Activated CD4-positive, alpha-beta T cell treated with anti-CD3 and anti-CD28 coated beads, Interleukin-2, amount 10 ng/mL, durations not matched to agents 24 days and 14 days (primary cell): ENCODE measurements at regions of chr16 and their contacts with region 1.

Region 1: GRCh38 chr16:87316923-87317749 is at the start of gene C16orf95:
- DNase-seq: peak; percentile 99
- H3K4me3 Mint-ChIP-seq: peak within 1 kb of the TSS; percentile 93
- H3K27ac Mint-ChIP-seq: peak within 1 kb of the TSS; percentile 97
- H3K4me1 Mint-ChIP-seq: peaks cover 16% of the 10 kb centered on the region
- H3K27me3 Mint-ChIP-seq: no peaks in the 10 kb centered on the region
- total RNA-seq, gene C16orf95: 10.9 and 11.1 TPM in 2 replicates

Region 2: GRCh38 chr16:87297918-87298631 is 19.1 kb before region 1 on chr16:
- intact Hi-C with region 1: loop called (anchors 1 kb)
- DNase-seq: peak; percentile 82
- H3K4me3 Mint-ChIP-seq: no peak overlapping the region
- H3K27ac Mint-ChIP-seq: no peak overlapping the region
- H3K4me1 Mint-ChIP-seq: peaks cover 16% of the 10 kb centered on the region
- H3K27me3 Mint-ChIP-seq: no peaks in the 10 kb centered on the region

Region 3: DNA sequence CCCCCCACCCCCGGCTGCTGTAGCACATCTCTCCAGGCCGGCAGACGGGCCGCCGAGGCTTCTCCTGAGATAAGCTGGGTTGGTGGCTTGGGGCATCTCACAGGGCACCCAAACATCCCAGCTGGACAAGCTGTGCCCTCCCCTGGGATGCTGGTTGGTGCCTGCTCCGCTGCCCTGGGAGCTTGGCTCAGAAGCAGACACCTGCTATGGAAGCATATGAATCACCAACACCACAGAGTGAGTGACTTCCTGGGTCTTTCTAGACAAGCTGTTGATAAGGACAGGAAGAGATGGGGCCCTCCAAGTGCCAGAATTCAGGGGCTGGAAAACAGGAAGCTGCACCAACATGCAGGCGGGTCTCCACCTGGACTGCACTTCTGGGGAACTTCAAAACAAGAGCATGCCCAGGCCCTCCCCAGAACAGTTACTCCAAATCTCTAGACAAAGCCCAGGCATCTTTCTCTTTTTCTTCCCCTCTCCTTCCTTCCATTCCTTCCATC is 13.7 kb before region 1 on chr16:
- intact Hi-C with region 1: loop called (anchors 1 kb)
- DNase-seq: peak; percentile 71
- H3K4me3 Mint-ChIP-seq: peak overlapping the region; percentile 58
- H3K27ac Mint-ChIP-seq: peak overlapping the region; percentile 94
- H3K4me1 Mint-ChIP-seq: peaks cover 30% of the 10 kb centered on the region
- H3K27me3 Mint-ChIP-seq: no peaks in the 10 kb centered on the region

Region 4: GRCh38 chr16:87387942-87388817 is 71.0 kb after region 1 on chr16:
- intact Hi-C with region 1: loop called (anchors 1 kb)
- DNase-seq: peak; percentile 96
- H3K4me3 Mint-ChIP-seq: peak overlapping the region; percentile 44
- H3K27ac Mint-ChIP-seq: peak overlapping the region; percentile 96
- H3K4me1 Mint-ChIP-seq: peaks cover 40% of the 10 kb centered on the region
- H3K27me3 Mint-ChIP-seq: peaks cover 2% of the 10 kb centered on the region

Region 5: DNA sequence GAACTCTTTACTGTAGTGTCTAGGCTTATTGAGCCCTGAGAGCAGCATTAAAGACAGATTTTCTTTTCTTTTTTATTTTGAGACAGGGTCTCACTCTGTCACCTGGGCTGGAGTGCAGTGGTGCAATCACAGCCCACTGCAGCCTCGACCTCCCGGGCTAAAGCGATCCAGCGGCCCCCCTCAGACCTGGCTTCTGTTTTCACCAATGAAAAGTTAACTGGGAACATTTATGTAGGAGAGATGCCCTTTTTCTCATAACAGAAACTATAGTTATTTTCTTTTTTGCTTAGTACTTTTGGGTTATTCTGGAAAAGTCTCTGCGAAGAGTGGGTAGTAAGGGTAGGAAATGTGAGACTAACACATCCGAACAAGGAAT is 76.5 kb after region 1 on chr16:
- intact Hi-C with region 1: loop called (anchors 1 kb)
- DNase-seq: no peak
- H3K4me3 Mint-ChIP-seq: peak overlapping the region; percentile 89
- H3K27ac Mint-ChIP-seq: peak overlapping the region; percentile 90
- H3K4me1 Mint-ChIP-seq: peaks cover 37% of the 10 kb centered on the region
- H3K27me3 Mint-ChIP-seq: no peaks in the 10 kb centered on the region

Region 6: DNA sequence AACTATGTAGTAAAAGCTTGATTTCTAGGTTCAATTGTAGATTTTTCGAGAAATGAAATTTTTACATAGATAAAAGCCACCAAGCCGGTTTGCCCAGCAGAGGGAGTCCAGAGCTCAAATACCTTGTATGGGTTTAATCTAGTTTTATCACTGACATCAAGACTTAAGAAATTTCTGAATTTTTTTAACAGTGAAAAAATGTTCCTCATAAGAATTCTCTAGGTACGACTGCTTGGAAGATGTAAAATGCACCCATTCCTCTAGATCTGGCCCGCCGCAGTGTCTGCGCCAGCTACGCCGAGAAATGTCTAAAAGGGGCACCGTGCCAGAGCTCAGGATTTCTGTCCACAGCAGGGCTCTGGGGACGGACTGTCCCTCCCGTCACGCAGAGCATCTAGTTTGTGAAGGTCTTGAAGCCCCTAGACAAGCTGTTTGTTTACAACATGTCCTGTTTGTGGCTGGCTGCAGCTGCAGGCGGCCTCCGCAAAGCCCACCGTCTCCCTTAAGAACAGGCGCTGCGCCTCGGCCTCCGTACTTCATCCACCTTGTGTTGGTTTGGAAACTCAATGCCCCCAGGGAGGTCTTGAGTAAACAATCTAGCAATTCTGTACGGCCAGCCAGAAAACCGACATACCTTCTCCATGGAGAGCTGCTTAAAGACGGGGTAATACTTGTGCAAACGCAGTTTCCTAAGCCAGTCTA is 99.8 kb after region 1 on chr16:
- intact Hi-C with region 1: no loop called
- DNase-seq: peak; percentile 68
- H3K4me3 Mint-ChIP-seq: no peak overlapping the region
- H3K27ac Mint-ChIP-seq: no peak overlapping the region
- H3K4me1 Mint-ChIP-seq: no peaks in the 10 kb centered on the region
- H3K27me3 Mint-ChIP-seq: no peaks in the 10 kb centered on the region

Region 7: DNA sequence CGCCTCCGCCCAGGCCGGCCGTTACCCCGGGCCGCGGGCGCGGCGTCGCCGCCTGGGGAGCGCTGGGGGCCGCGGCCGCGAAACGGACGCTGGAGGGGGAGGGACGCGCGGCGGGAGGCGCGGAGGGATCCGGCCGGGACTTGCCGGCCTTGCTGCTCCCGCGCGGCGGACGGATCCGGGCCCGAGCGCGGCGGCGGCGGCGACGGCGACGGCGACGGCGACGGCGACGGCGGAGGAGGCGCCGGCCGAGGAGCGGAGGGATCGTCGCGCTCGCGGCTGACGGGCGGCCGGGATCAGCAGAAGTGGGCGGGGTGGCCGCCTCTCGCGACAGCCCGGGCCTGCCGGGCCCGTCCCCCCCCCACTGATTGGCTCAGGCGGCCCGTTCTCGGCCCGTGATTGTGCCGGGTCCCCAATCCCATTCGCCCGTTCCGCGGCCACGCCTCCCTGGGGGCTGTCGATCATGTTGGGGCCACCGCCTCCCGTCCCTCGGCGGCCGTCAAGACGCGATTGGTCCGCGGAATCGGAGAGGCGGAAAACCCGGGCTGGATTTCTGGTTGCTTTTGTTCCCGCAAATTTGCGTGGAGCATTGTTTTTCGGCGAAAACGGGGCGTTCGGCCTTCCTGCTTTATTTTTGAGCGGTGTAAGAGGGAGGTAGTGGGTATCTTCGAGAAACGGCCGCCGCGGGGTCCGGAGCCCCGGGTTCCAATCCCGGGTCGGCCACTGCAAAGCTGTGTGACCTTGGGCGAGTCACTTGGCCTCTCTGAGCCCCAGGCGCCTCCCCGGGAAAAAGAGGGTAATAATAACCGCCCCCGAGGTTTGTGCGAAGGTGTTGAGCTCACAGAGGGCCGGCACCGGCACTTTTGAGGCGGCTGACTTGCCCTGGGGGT is 175.8 kb after region 1 on chr16 and contains the start of gene ZCCHC14:
- intact Hi-C with region 1: loop called (anchors 10 kb)
- DNase-seq: peak; percentile 100
- H3K4me3 Mint-ChIP-seq: peak within 1 kb of the TSS; percentile 82
- H3K27ac Mint-ChIP-seq: peak within 1 kb of the TSS; percentile 64
- H3K4me1 Mint-ChIP-seq: peaks cover 34% of the 10 kb centered on the region
- H3K27me3 Mint-ChIP-seq: peaks cover 40% of the 10 kb centered on the region
- total RNA-seq, gene ZCCHC14: 11.6 and 12.0 TPM in 2 replicates

Region 8: DNA sequence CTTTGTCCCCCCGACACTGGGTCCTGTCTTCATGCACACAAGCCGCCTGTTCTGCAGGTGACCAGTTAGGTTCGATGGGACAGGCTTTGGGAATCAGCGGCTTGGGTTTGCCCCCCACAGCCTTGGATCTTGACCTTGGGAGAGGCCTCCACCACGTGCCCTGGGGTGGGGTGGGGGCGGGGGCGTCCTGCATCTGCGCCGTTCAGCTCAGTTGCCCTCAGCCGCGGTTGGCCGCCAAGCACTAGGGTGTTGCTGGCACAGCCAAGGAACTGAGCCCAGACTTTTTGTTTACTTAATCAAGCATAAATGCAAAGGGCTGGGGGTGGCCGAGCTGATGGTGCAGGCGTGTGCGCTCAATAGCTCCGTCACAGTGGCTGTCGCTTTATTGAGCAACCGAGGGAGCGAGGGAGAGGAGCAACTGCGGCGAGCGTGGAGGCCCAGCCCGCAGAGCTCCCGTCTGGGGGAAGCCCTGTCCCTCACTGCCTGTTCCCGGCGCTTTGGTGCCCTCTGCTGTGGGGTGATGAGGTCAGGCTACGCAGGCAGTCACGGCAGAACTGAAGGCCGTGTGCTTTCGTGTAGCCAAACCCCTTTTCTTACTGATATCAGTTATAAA is 319.0 kb after region 1 on chr16:
- intact Hi-C with region 1: loop called (anchors 5 kb)
- DNase-seq: peak; percentile 92
- H3K4me3 Mint-ChIP-seq: peak overlapping the region; percentile 73
- H3K27ac Mint-ChIP-seq: no peak overlapping the region
- H3K4me1 Mint-ChIP-seq: peaks cover 7% of the 10 kb centered on the region
- H3K27me3 Mint-ChIP-seq: peaks cover 6% of the 10 kb centered on the region